K562 (cell line): ENCODE measurements at regions of chr2 and their contacts with region 1.

Region 1: DNA sequence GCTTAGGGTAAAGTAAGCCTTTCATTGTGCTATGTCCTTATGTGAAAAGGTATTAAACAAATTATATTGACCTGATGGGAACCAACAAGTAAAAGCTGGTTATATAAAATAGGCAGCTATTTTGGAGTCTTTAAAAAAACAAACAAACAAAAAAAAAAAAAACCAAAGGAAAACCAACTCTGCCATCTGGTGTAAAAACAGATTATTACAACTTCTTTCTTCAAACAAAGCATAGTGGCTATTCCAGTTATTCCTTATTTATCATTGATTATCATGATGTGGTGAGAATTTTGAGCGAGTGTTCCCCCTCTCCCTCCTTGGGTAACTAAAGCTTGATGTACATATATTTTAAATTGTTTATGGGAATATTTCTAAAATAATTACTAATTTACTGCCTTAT is 122.4 kb upstream of the FHL2 start:
- DNase-seq: peak in 3 of 4 experiments; percentile 18 to 30 (median 23)
- ATAC-seq: no peak
- H3K4me3 ChIP-seq: no peak overlapping the region
- H3K27ac ChIP-seq: no peak overlapping the region
- H3K4me1 ChIP-seq: peaks cover 10 to 11% of the 10 kb centered on the region in 2 experiments; a peak in 4 of 5 replicates
- H3K27me3 ChIP-seq: no peaks in the 10 kb centered on the region; a peak in 1 of 5 replicates
- CTCF ChIP-seq: peak; percentile 28 to 78 (median 51); a peak in 3 of 6 replicates
- EP300 ChIP-seq: no peak
- POLR2A ChIP-seq: no peak
- RAD21 ChIP-seq: peak; percentile 88

Region 2: GRCh38 chr2:105344704-105345345 is 176.4 kb before region 1 on chr2:
- CTCF ChIA-PET with region 1: interaction called, 6 read pairs
- POLR2A ChIA-PET with region 1: interaction called, 3 read pairs
- in situ Hi-C with region 1: no loop called
- intact Hi-C with region 1: loop called (anchors 1 kb)
- DNase-seq: peak in 1 of 4 experiments; percentile 33
- ATAC-seq: peak; percentile 57; the same call in 2 of the 3 replicates
- H3K4me3 ChIP-seq: no peak overlapping the region
- H3K27ac ChIP-seq: no peak overlapping the region
- H3K4me1 ChIP-seq: no peaks in the 10 kb centered on the region
- H3K27me3 ChIP-seq: no peaks in the 10 kb centered on the region
- CTCF ChIP-seq: peak in 2 of 3 experiments; percentile 13 to 54; a peak in 3 of 6 replicates
- EP300 ChIP-seq: no peak
- POLR2A ChIP-seq: no peak
- RAD21 ChIP-seq: peak; percentile 35 to 49

Region 3: GRCh38 chr2:105369747-105370690 is 151.2 kb before region 1 on chr2:
- CTCF ChIA-PET with region 1: interaction called, 117 read pairs
- POLR2A ChIA-PET with region 1: interaction called, 5 read pairs
- in situ Hi-C with region 1: loop called (anchors 5 kb)
- intact Hi-C with region 1: loop called (anchors 1 kb)
- DNase-seq: peak; percentile 62 to 90 (median 72)
- ATAC-seq: peak; percentile 99
- H3K4me3 ChIP-seq: no peak overlapping the region
- H3K27ac ChIP-seq: no peak overlapping the region
- H3K4me1 ChIP-seq: peaks cover 0 to 4% of the 10 kb centered on the region in 2 experiments; a peak in 2 of 5 replicates
- H3K27me3 ChIP-seq: no peaks in the 10 kb centered on the region
- CTCF ChIP-seq: peak; percentile 96
- EP300 ChIP-seq: no peak
- POLR2A ChIP-seq: no peak
- RAD21 ChIP-seq: peak; percentile 97

Region 4: GRCh38 chr2:105377819-105378218 is 143.4 kb before region 1 on chr2:
- CTCF ChIA-PET with region 1: interaction called, 18 read pairs
- POLR2A ChIA-PET with region 1: interaction called, 5 read pairs
- in situ Hi-C with region 1: loop called (anchors 5 kb)
- intact Hi-C with region 1: loop called (anchors 2 kb)
- DNase-seq: peak in 1 of 4 experiments; percentile 29
- ATAC-seq: peak; percentile 20; the same call in 1 of the 3 replicates
- H3K4me3 ChIP-seq: no peak overlapping the region
- H3K27ac ChIP-seq: no peak overlapping the region
- H3K4me1 ChIP-seq: peaks cover 0 to 20% of the 10 kb centered on the region in 2 experiments; a peak in 3 of 5 replicates
- H3K27me3 ChIP-seq: no peaks in the 10 kb centered on the region
- CTCF ChIP-seq: peak; percentile 27 to 61 (median 33); a peak in 3 of 6 replicates
- EP300 ChIP-seq: no peak
- POLR2A ChIP-seq: no peak
- RAD21 ChIP-seq: peak; percentile 37 to 64; a peak in 3 of 4 replicates

Region 5: DNA sequence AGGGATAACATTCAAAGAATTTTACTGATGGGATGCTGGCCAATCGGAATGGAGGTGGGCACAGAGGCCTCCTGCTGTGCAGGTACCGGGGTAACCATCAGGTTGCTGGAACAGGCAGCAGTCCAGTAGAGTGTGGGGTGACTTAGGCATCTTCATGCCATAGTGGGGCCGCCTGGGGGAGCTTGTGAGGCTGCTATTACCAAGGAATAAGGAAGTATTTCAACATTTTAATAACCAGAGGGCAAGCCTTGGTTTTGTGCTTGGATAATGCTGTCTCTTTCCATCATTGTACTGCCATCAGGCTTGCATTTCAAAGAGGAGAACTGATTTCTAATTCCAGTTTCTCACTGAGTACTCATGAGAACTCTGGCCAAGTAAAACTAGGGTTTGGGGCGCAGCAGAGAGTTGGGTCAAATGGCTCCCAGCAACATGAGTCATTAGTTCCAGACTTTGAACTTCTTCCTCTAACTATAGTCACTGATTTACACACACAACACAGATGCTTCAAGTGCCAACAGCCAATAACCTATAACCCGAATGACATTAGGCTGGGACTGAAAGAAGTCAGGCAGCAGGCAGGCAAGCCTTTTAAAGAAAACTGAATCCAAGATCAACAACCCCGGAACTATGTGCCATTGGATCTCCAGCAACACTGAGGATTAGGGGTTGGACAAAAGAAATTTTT is 66.3 kb before region 1 on chr2:
- CTCF ChIA-PET with region 1: interaction called, 11 read pairs
- POLR2A ChIA-PET with region 1: interaction called, 5 read pairs
- in situ Hi-C with region 1: no loop called
- intact Hi-C with region 1: loop called (anchors 1 kb)
- DNase-seq: peak; percentile 37 to 74 (median 51)
- ATAC-seq: peak; percentile 94
- H3K4me3 ChIP-seq: no peak overlapping the region
- H3K27ac ChIP-seq: no peak overlapping the region
- H3K4me1 ChIP-seq: peaks cover 0 to 17% of the 10 kb centered on the region in 2 experiments; a peak in 2 of 5 replicates
- H3K27me3 ChIP-seq: no peaks in the 10 kb centered on the region
- CTCF ChIP-seq: peak; percentile 69 to 81 (median 78)
- EP300 ChIP-seq: peak; percentile 22; the same call in 1 of the 2 replicates
- POLR2A ChIP-seq: no peak
- RAD21 ChIP-seq: peak; percentile 80 to 81